ENCODE measurements at regions of chr4 and their contacts with region 1.

Region 1: DNA sequence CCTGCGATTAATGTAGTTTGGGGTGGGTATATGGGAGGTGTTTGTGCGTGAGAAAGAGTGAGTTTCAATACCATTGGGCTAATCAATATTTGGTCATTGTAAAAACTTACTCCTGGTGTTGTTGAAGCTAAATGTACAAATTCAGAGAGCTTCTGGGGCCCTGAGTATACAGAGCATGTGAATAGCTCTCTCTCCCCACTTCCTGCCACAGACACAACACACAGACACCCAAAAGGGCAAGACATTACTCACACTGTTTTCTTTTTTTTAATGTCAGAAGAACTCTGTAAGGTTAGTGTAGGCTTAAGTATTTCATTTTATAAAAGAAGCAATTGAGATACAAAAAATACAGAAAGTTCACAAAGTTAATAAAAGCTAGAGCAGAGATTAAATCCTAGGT is 151.3 kb upstream of the KCNIP4 start:
- DNase-seq: no peak
- ATAC-seq: no peak

Region 2: DNA sequence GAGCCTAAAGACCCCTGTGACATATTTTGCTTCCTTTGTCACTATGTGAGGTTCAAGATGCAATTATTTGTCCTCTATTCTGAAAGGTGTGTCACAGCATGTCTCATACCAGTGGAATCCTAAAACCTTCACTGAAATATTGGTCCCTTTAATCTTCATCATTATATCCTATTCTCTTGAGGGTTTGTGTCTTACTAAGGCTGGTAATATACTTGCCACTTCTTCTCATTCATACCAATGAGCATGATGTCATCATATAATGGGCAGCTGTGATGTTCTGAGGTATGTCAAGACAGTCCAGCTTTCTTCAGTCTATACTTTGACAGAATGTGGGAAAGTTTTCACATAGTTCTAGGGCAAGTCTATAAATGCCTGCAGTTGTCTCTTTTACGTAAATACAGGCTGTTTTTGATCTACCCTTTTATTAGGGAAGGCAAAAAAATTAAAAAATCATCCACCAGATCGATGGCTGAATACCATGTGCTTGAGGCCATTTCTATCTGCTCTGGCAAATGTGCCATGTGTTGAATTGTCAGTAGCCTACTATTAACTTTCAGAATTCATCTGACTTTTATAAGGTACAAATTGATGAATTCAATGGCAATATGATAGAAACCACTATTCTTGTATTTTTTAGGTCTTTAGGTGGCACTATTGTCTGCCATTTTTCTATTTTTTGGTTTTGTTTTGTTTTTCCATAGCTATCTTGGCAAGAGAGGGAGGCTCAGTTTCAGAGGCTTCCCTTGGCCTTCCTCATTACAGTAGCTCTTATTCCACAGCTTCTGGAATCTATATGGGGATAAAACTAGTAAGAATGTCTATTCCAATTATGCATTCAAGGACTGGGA is 1581.0 kb after region 1 on chr4:
- intact Hi-C with region 1: loop called (anchors 10 kb)
- DNase-seq: no peak
- ATAC-seq: no peak

Measured in sciatic nerve (tissue), 2 donors.